Left ventricle myocardium superior (tissue), 1 donor: ENCODE measurements at regions of chr5 and their contacts with region 1.

Region 1: GRCh38 chr5:123538670-123539459 is 26.9 kb downstream of the CSNK1G3 start:
- DNase-seq: no peak
- ATAC-seq: peak; percentile 27

Region 2: GRCh38 chr5:123598028-123598689 is 59.3 kb after region 1 on chr5:
- intact Hi-C with region 1: loop called (anchors 10 kb)
- DNase-seq: no peak
- ATAC-seq: no peak